ENCODE measurements at regions of chr10 and their contacts with region 1.

Region 1: GRCh38 chr10:86798611-86799010 is 42.2 kb downstream of the BMPR1A start:
- DNase-seq: no peak
- H3K4me3 Mint-ChIP-seq: no peak overlapping the region
- H3K27ac Mint-ChIP-seq: no peak overlapping the region
- H3K4me1 Mint-ChIP-seq: no peaks in the 10 kb centered on the region
- H3K27me3 Mint-ChIP-seq: no peaks in the 10 kb centered on the region
- CTCF ChIP-seq: no peak

Region 2: DNA sequence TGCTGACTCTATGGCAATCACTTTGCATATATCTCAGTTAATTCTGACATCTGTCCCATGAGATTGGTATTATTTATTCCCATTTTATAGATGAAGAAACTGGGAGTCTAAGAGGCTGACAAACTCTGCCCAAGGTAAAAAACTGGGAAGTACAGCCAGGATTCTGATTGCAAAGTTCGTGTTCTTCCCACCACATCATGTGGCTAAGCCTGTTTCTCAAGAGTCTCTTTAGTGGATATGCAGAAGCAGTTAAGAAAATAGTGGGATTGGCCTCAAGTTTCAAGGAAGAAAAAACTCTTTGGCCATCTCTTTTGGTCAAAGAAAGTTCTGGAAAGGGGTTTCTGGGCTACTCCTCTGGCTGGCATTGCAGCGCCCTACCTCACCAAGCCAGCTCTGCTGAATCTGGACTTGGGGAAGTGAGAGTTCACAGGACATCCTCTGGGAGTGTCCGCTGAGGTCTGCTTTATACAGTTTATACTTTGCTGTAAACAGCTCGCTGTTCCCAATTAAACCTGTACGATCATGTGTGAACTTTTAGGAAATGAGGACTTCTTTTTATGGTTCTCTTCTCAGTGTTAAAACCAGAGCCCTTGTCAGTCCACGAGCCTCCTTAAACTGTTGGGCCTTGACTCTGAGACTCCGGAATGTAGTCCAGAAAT is 54.4 kb before region 1 on chr10:
- CTCF ChIA-PET with region 1: no interaction called
- intact Hi-C with region 1: no loop called
- DNase-seq: no peak
- H3K4me3 Mint-ChIP-seq: no peak overlapping the region
- H3K27ac Mint-ChIP-seq: no peak overlapping the region
- H3K4me1 Mint-ChIP-seq: no peaks in the 10 kb centered on the region
- H3K27me3 Mint-ChIP-seq: no peaks in the 10 kb centered on the region
- CTCF ChIP-seq: no peak

Region 3: GRCh38 chr10:86830043-86830591 is 31.5 kb after region 1 on chr10:
- CTCF ChIA-PET with region 1: no interaction called
- intact Hi-C with region 1: loop called (anchors 5 kb)
- DNase-seq: no peak
- H3K4me3 Mint-ChIP-seq: no peak overlapping the region
- H3K27ac Mint-ChIP-seq: no peak overlapping the region
- H3K4me1 Mint-ChIP-seq: peaks cover 10% of the 10 kb centered on the region
- H3K27me3 Mint-ChIP-seq: no peaks in the 10 kb centered on the region
- CTCF ChIP-seq: no peak